ENCODE measurements at regions of chr18 and their contacts with region 1.

Region 1: GRCh38 chr18:65091744-65092329 is 659.0 kb upstream of the CDH7 start:
- DNase-seq: no peak
- ATAC-seq: peak in 1 of 8 donors; percentile 48
- H3K4me3 ChIP-seq: no peak overlapping the region
- H3K27ac ChIP-seq: no peak overlapping the region
- H3K4me1 ChIP-seq: no peaks in the 10 kb centered on the region
- H3K27me3 ChIP-seq: no peaks in the 10 kb centered on the region
- CTCF ChIP-seq: peak in 7 of 9 donors; percentile 48 to 69 (median 56)

Region 2: GRCh38 chr18:64017870-64018269 is 1074.0 kb before region 1 on chr18:
- intact Hi-C with region 1: loop called in 2 of 10 experiments (anchors 10 kb)
- DNase-seq: no peak
- ATAC-seq: no peak
- H3K4me3 ChIP-seq: no peak overlapping the region
- H3K27ac ChIP-seq: no peak overlapping the region
- H3K4me1 ChIP-seq: no peaks in the 10 kb centered on the region
- H3K27me3 ChIP-seq: peaks cover 0 to 7% (median 0%) of the 10 kb centered on the region in 7 donors
- CTCF ChIP-seq: peak in 8 of 9 donors; percentile 21 to 65 (median 48)

Region 3: GRCh38 chr18:64027931-64028695 is 1063.7 kb before region 1 on chr18:
- intact Hi-C with region 1: loop called in 1 of 10 experiments (anchors 10 kb)
- DNase-seq: no peak
- ATAC-seq: peak in 6 of 8 donors; percentile 42 to 77 (median 70)
- H3K4me3 ChIP-seq: no peak overlapping the region
- H3K27ac ChIP-seq: peak overlapping the region in 1 of 10 donors; percentile 25
- H3K4me1 ChIP-seq: peaks cover 0 to 4% (median 0%) of the 10 kb centered on the region in 9 donors
- H3K27me3 ChIP-seq: peaks cover 0 to 9% (median 0%) of the 10 kb centered on the region in 7 donors
- CTCF ChIP-seq: no peak

Measured in heart right ventricle (tissue), 16 donors.